ENCODE measurements at regions of chr4 and their contacts with region 1.

Region 1: DNA sequence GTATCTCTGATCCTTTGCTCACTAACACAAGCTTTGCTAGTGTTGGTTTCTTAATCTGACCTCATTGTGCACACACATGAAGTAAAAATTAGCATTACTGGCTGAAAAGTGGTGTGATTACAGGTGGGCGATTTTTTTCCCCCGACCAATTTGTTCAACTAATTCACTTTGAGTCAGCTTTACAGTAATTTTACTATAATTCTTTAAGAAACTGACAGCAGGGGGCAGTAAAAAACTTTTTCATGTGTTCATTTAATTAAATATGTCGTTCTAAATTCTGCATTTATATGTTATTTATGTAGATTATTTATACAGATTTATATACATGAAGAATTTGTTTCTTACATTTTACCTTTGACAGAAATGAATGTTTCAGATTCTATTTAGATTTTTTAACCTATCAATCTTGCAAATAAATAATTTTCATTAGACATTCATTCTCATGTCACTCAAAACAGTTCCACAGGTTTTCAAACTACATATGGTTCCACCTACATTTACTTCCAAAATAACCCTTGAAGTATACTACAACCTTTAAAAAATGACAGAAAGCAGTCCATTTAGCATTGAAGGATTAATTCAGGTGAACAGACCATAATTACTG is 17.5 kb downstream of the PALLD start:
- DNase-seq: peak; percentile 50
- ATAC-seq: no peak
- H3K4me3 ChIP-seq: no peak overlapping the region
- H3K27ac ChIP-seq: no peak overlapping the region
- H3K4me1 ChIP-seq: peaks cover 5% of the 10 kb centered on the region
- H3K27me3 ChIP-seq: no peaks in the 10 kb centered on the region
- CTCF ChIP-seq: peak; percentile 54
- POLR2A ChIP-seq: no peak
- RAD21 ChIP-seq: peak; percentile 60

Region 2: GRCh38 chr4:168408620-168409019 is 105.7 kb before region 1 on chr4:
- CTCF ChIA-PET with region 1: no interaction called
- POLR2A ChIA-PET with region 1: no interaction called
- dilution Hi-C with region 1: no loop called
- in situ Hi-C with region 1: loop called (anchors 25 kb)
- intact Hi-C with region 1: no loop called
- DNase-seq: peak; percentile 98
- ATAC-seq: peak; percentile 82
- H3K4me3 ChIP-seq: no peak overlapping the region
- H3K27ac ChIP-seq: no peak overlapping the region
- H3K4me1 ChIP-seq: no peaks in the 10 kb centered on the region; the same call in 1 of the 2 replicates
- H3K27me3 ChIP-seq: no peaks in the 10 kb centered on the region
- CTCF ChIP-seq: no peak
- POLR2A ChIP-seq: 0 out of 2 replicates have a peak, but pooled peaks have one; percentile 47
- RAD21 ChIP-seq: 0 out of 2 replicates have a peak, but pooled peaks have one; percentile 2

Region 3: GRCh38 chr4:168585168-168586091 is 71.1 kb after region 1 on chr4:
- CTCF ChIA-PET with region 1: interaction called, 3 read pairs
- POLR2A ChIA-PET with region 1: no interaction called
- dilution Hi-C with region 1: no loop called
- in situ Hi-C with region 1: no loop called
- intact Hi-C with region 1: loop called (anchors 2 kb)
- DNase-seq: peak; percentile 82
- ATAC-seq: peak; percentile 87
- H3K4me3 ChIP-seq: no peak overlapping the region
- H3K27ac ChIP-seq: no peak overlapping the region
- H3K4me1 ChIP-seq: peaks cover 18% of the 10 kb centered on the region
- H3K27me3 ChIP-seq: no peaks in the 10 kb centered on the region
- CTCF ChIP-seq: peak; percentile 76
- POLR2A ChIP-seq: no peak
- RAD21 ChIP-seq: peak; percentile 88

Region 4: GRCh38 chr4:168694648-168695047 is 180.3 kb after region 1 on chr4:
- CTCF ChIA-PET with region 1: interaction called, 4 read pairs
- POLR2A ChIA-PET with region 1: no interaction called
- dilution Hi-C with region 1: no loop called
- in situ Hi-C with region 1: no loop called
- intact Hi-C with region 1: loop called (anchors 10 kb)
- DNase-seq: peak; percentile 72
- ATAC-seq: peak; percentile 79
- H3K4me3 ChIP-seq: no peak overlapping the region
- H3K27ac ChIP-seq: no peak overlapping the region
- H3K4me1 ChIP-seq: peaks cover 14% of the 10 kb centered on the region
- H3K27me3 ChIP-seq: no peaks in the 10 kb centered on the region
- CTCF ChIP-seq: no peak
- POLR2A ChIP-seq: no peak
- RAD21 ChIP-seq: no peak

Region 5: GRCh38 chr4:168917138-168917779 is 402.9 kb after region 1 on chr4:
- CTCF ChIA-PET with region 1: interaction called, 4 read pairs
- POLR2A ChIA-PET with region 1: no interaction called
- dilution Hi-C with region 1: no loop called
- in situ Hi-C with region 1: loop called (anchors 5 kb)
- intact Hi-C with region 1: loop called (anchors 5 kb)
- DNase-seq: peak; percentile 54
- ATAC-seq: peak; percentile 46
- H3K4me3 ChIP-seq: no peak overlapping the region
- H3K27ac ChIP-seq: no peak overlapping the region
- H3K4me1 ChIP-seq: peaks cover 2% of the 10 kb centered on the region; the same call in 1 of the 2 replicates
- H3K27me3 ChIP-seq: no peaks in the 10 kb centered on the region
- CTCF ChIP-seq: peak; percentile 52
- POLR2A ChIP-seq: no peak
- RAD21 ChIP-seq: peak; percentile 50

Measured in IMR-90 (cell line).